ENCODE measurements at regions of chr3 and their contacts with region 1.

Region 1: DNA sequence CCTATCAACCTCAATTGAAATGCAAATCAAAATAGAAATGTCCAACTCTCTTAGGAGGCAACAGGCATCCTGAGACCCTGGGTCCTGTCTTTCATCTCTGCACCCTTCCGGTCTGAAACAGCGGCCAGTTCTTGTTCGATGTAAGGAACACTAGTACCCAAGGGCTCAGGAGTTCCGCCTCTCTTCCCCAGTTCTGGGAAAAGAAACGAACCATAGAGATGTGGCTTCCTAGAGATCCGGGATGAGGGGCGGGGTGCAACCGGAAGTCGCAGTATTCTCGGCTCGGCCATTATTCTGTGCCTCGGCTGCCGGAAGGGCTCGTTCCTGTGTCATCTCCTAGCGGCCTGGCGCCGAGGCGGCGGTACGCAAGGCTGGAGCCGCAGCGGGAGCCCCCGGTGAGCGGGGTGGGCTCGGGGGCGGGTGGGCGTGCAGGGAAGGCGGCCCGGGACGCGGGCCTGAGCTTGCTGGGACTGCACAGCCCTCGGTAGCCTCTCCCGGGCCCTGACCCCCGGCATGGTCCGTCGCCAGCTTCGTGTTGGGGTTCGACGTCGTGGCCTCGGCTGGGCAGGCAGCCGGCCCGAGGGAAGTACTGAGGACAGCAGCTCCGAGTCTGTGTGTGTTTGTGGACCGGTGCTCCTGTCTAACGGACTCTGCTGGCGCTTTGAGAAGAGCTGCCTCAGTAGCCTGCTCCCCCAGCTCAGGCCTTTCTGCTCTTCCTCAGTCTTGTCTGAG is at the start of gene ZNF197:
- DNase-seq: peak; percentile 51
- ATAC-seq: peak; percentile 90
- H3K4me3 Mint-ChIP-seq: peak within 1 kb of the TSS; percentile 90
- H3K27ac Mint-ChIP-seq: peak within 1 kb of the TSS; percentile 65
- H3K4me1 Mint-ChIP-seq: peaks cover 34% of the 10 kb centered on the region
- H3K27me3 Mint-ChIP-seq: no peaks in the 10 kb centered on the region
- CTCF ChIP-seq: no peak
- total RNA-seq, gene ZNF197: 15.8 and 16.9 TPM in 2 replicates

Region 2: GRCh38 chr3:43870120-43870519 is 754.8 kb before region 1 on chr3:
- CTCF ChIA-PET with region 1: no interaction called
- POLR2A ChIA-PET with region 1: no interaction called
- intact Hi-C with region 1: no loop called
- DNase-seq: no peak
- ATAC-seq: no peak
- H3K4me3 Mint-ChIP-seq: no peak overlapping the region
- H3K27ac Mint-ChIP-seq: no peak overlapping the region
- H3K4me1 Mint-ChIP-seq: no peaks in the 10 kb centered on the region
- H3K27me3 Mint-ChIP-seq: peaks cover 14% of the 10 kb centered on the region
- CTCF ChIP-seq: no peak

Region 3: DNA sequence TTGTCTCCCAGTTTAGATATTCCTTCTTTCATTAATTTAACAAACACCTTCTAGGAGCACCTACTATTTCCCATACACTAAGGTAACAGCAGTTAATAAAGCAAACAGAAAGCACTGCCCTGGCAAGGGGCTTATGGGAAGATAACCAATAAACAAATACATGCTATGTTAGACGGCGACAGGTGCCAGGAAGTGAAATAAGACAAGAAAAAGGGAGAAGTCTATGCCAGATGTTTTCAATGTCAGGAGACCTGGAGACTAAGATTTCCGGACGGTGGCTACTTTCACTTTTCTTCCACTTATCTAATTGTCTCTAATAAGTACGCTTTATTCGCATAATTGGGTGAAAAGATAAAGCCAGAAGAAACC is 114.9 kb before region 1 on chr3:
- CTCF ChIA-PET with region 1: no interaction called
- POLR2A ChIA-PET with region 1: interaction called, 15 read pairs
- intact Hi-C with region 1: loop called (anchors 2 kb)
- DNase-seq: no peak
- ATAC-seq: peak; percentile 30
- H3K4me3 Mint-ChIP-seq: peak overlapping the region; percentile 95
- H3K27ac Mint-ChIP-seq: peak overlapping the region; percentile 92
- H3K4me1 Mint-ChIP-seq: peaks cover 40% of the 10 kb centered on the region
- H3K27me3 Mint-ChIP-seq: no peaks in the 10 kb centered on the region
- CTCF ChIP-seq: no peak

Region 4: DNA sequence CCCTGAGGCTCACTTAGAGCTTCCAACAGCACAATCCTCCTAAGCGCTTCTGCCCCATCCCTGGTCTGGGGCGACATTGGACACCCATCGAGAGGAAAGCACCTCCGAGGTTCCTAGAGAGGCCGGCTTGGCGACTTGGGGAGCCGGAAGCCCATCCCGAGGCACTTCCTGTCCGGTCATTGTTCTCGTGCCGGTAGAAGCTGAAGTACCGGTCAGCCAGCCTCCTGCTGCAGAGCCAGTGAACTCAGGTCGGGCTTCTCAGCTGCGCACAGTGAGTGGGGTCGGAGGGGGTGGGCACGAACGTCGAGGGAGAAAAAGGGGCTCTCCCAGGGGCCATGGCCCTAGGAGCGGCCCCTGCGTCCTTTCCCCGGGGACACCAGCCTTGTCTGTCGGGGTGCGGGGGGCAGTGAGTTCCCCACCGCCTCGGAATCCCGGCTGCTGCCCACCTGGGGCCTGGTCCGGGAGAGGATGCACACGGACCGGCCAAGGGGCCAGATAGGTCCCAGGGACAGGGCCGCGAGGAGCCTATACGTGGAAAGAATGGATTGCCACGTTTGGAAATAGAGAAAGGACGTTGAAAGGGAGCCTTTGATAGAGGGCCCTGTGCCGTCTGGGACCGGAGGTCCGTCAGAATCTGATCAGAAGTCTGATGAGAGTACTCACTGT is 23.8 kb after region 1 on chr3 and contains the start of gene ZNF35:
- CTCF ChIA-PET with region 1: no interaction called
- POLR2A ChIA-PET with region 1: interaction called, 9 read pairs
- intact Hi-C with region 1: loop called (anchors 1 kb)
- DNase-seq: peak; percentile 41
- ATAC-seq: peak; percentile 86
- H3K4me3 Mint-ChIP-seq: peak within 1 kb of the TSS; percentile 96
- H3K27ac Mint-ChIP-seq: peak within 1 kb of the TSS; percentile 83
- H3K4me1 Mint-ChIP-seq: peaks cover 24% of the 10 kb centered on the region
- H3K27me3 Mint-ChIP-seq: no peaks in the 10 kb centered on the region
- CTCF ChIP-seq: no peak
- total RNA-seq, gene ZNF35: 13.9 and 17.5 TPM in 2 replicates

Region 5: DNA sequence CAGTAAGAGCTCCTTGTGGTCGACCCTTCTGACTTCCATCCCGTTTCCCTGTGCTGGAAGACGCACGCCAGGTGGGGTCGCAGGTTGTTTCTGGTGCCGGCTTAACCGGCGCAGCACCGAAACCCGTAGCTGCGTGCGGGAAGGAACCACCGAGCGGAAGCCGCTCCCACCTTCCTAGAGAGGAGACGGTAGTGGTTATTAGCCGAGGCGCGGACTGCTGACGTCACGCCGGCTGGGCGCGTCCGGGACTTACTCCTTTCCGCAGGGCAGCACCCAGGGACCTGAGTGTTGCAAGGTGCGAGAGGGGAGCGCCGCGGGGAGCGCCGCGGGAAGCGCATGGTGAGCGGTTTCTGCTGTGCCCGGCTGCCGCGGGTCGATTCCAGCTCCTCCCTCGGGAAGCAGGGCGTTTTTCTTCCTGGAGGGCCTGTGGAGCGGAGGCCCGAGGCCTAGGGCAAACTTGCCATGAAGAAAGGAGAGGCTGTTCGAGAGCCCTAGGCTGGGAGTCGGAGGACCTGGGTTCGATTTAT is 104.5 kb after region 1 on chr3 and contains the start of gene ZNF501:
- CTCF ChIA-PET with region 1: no interaction called
- POLR2A ChIA-PET with region 1: interaction called, 3 read pairs
- intact Hi-C with region 1: loop called (anchors 1 kb)
- DNase-seq: peak; percentile 80
- ATAC-seq: peak; percentile 98
- H3K4me3 Mint-ChIP-seq: peak within 1 kb of the TSS; percentile 92
- H3K27ac Mint-ChIP-seq: peak within 1 kb of the TSS; percentile 75
- H3K4me1 Mint-ChIP-seq: peaks cover 15% of the 10 kb centered on the region
- H3K27me3 Mint-ChIP-seq: no peaks in the 10 kb centered on the region
- CTCF ChIP-seq: no peak
- total RNA-seq, gene ZNF501: 6.2 and 6.5 TPM in 2 replicates